Gastrocnemius medialis (tissue), 4 donors: ENCODE measurements at regions of chr5 and their contacts with region 1.

Region 1: GRCh38 chr5:173753307-173754168 is 134.6 kb upstream of the CPEB4 start:
- DNase-seq: peak; percentile 91 to 97
- ATAC-seq: peak; percentile 88 to 91
- H3K4me3 ChIP-seq: peak overlapping the region in 2 of 4 donors; percentile 29 to 35
- H3K27ac ChIP-seq: peak overlapping the region; percentile 88 to 97 (median 92)
- H3K4me1 ChIP-seq: peaks cover 44 to 47% of the 10 kb centered on the region in 2 donors
- H3K27me3 ChIP-seq: no peaks in the 10 kb centered on the region
- CTCF ChIP-seq: no peak
- POLR2A ChIP-seq: no peak

Region 2: GRCh38 chr5:173567574-173567973 is 186.0 kb before region 1 on chr5:
- in situ Hi-C with region 1: no loop called
- intact Hi-C with region 1: no loop called
- DNase-seq: no peak
- ATAC-seq: no peak
- H3K4me3 ChIP-seq: no peak overlapping the region
- H3K27ac ChIP-seq: no peak overlapping the region
- H3K4me1 ChIP-seq: peaks cover under 1 to 3% of the 10 kb centered on the region in 2 donors
- H3K27me3 ChIP-seq: no peaks in the 10 kb centered on the region
- CTCF ChIP-seq: no peak
- POLR2A ChIP-seq: no peak

Region 3: DNA sequence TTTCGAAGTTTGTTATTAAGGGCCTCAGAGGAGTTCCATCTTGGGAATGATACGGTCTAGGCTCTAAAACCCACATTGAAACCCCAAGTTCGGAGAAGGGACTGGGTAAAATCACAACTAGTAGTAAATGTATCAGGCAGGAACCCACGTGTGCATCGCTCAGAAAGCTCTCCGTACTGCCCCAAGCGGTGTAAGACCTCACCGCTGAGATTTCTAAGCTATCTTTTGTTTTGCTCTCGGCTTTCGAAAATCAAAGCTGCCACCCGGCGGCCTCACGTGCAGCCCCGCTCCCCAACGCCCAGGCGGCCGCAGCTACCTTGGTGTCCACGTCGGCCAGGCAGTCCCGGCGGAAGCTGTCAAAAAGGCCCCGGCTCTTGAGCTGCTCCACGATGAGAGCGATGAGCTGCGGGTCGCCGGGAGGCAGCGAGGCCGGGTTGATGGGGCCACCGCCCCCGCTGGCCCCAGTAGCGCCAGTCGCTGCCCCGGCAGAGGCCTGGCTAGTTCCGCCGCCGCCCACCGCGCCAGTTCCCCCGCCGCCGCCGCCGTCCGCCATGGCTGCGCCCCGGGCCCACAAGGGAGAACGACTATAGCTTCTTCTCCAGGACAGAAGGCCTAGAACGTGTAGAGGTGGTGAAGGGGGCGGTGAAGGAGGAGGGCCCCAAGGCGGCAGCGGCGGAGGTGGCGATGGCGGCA is 137.5 kb before region 1 on chr5:
- in situ Hi-C with region 1: no loop called
- intact Hi-C with region 1: loop called (anchors 5 kb)
- DNase-seq: peak; percentile 35 to 61
- ATAC-seq: peak; percentile 73 to 77
- H3K4me3 ChIP-seq: peak overlapping the region; percentile 75 to 91 (median 88)
- H3K27ac ChIP-seq: peak overlapping the region; percentile 95 to 98 (median 97)
- H3K4me1 ChIP-seq: peaks cover 40 to 49% of the 10 kb centered on the region in 2 donors
- H3K27me3 ChIP-seq: no peaks in the 10 kb centered on the region
- CTCF ChIP-seq: peak; percentile 46 to 81 (median 67)
- POLR2A ChIP-seq: no peak

Region 4: GRCh38 chr5:173671121-173671949 is 82.2 kb before region 1 on chr5:
- in situ Hi-C with region 1: no loop called
- intact Hi-C with region 1: loop called (anchors 1 kb)
- DNase-seq: peak; percentile 92 to 97
- ATAC-seq: peak; percentile 85 to 88
- H3K4me3 ChIP-seq: peak overlapping the region; percentile 32 to 48 (median 44)
- H3K27ac ChIP-seq: peak overlapping the region; percentile 87 to 91 (median 88)
- H3K4me1 ChIP-seq: peaks cover 35 to 44% of the 10 kb centered on the region in 2 donors
- H3K27me3 ChIP-seq: no peaks in the 10 kb centered on the region
- CTCF ChIP-seq: no peak
- POLR2A ChIP-seq: peak; percentile 66 to 67

Region 5: GRCh38 chr5:173707392-173707791 is 46.1 kb before region 1 on chr5:
- in situ Hi-C with region 1: no loop called
- intact Hi-C with region 1: loop called (anchors 1 kb)
- DNase-seq: peak; percentile 93 to 97
- ATAC-seq: peak; percentile 98 to 99
- H3K4me3 ChIP-seq: no peak overlapping the region
- H3K27ac ChIP-seq: peak overlapping the region; percentile 78 to 86 (median 84)
- H3K4me1 ChIP-seq: peaks cover 16 to 19% of the 10 kb centered on the region in 2 donors
- H3K27me3 ChIP-seq: no peaks in the 10 kb centered on the region
- CTCF ChIP-seq: no peak
- POLR2A ChIP-seq: peak; percentile 15 to 37

Region 6: DNA sequence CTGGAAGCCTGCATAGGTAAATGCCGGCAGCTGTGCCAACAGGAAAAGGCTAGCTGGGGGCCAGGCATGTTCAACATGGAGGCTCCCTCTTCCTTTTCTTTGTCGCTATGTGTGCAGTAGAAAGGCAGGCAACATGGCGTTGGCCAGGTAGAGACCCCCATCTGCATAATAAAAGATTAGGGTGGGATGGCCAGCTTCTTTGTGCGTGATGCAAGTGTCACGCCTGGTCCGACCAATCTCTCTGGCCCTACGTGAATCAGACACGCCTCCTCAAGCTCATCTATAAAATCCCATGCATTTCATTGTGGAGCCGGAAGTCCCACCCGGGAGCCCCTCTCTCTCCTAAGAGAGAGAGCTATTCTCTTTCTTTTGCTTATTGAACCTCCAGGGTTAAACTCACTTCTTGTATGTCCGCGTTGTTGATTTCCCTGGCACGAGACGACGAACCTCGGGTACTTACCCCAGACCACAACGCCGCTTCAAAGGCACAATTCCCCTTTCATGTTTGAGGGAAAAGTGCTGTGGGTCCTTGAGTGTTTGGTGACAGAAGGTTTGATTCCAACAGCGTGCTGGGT is 210.4 kb after region 1 on chr5:
- in situ Hi-C with region 1: loop called in 3 of 4 experiments (anchors 10 to 25 kb)
- intact Hi-C with region 1: loop called (anchors 5 kb)
- DNase-seq: no peak
- ATAC-seq: peak in 1 of 2 donors; percentile 13
- H3K4me3 ChIP-seq: peak overlapping the region in 3 of 4 donors; percentile 2 to 30 (median 4)
- H3K27ac ChIP-seq: peak overlapping the region; percentile 76 to 88 (median 84)
- H3K4me1 ChIP-seq: peaks cover 16 to 25% of the 10 kb centered on the region in 2 donors
- H3K27me3 ChIP-seq: no peaks in the 10 kb centered on the region
- CTCF ChIP-seq: no peak
- POLR2A ChIP-seq: peak in 1 of 2 donors; percentile 46